ENCODE measurements at regions of chr7 and their contacts with region 1.

Region 1: DNA sequence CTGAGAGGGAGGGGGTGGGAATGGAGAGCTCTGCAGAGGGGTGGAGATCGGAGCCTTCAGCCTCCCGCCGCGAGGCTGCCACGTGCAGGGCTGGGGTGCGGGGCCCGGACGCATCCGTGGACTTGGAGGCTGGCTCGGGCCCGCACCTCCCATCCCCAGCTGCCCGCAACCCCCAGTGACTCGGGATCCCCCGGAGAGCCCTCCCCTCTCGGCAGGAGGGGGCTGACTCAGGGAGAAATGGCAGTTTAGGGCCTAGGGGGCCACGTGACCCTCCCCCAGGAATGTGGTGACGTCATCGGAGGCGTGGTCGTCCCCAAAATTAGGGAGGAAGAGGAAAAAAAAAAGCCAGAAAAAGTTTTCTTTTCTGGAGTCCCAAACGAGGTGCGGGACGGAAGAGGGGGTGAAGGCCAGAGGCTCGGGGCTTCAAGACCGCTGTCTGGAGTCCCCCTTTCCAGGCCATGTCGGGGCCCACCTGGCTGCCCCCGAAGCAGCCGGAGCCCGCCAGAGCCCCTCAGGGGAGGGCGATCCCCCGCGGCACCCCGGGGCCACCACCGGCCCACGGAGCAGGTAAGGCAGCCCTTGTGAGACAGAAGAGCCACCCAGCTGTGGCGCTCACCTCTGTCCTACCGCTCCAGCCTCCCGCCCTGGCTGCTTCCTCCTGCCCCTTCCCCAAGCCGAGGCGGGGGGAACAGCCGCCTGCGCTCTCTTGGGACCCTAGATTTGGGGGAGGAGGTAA is at the start of gene TRIP6:
- DNase-seq: peak; percentile 88 to 90
- H3K4me3 ChIP-seq: peak within 1 kb of the TSS; percentile 88 to 98 (median 97)
- H3K27ac ChIP-seq: peak within 1 kb of the TSS; percentile 99 to 100
- H3K4me1 ChIP-seq: peaks cover 12 to 18% of the 10 kb centered on the region in 2 donors
- H3K27me3 ChIP-seq: no peaks in the 10 kb centered on the region
- CTCF ChIP-seq: no peak
- POLR2A ChIP-seq: no peak
- total RNA-seq, gene TRIP6: 45.3 to 62.8 (median 49.8) TPM

Region 2: GRCh38 chr7:100705753-100706671 is 161.2 kb before region 1 on chr7 and contains the start of gene POP7:
- intact Hi-C with region 1: loop called (anchors 10 kb)
- DNase-seq: peak; percentile 97 to 100
- H3K4me3 ChIP-seq: peak within 1 kb of the TSS; percentile 65 to 87 (median 79)
- H3K27ac ChIP-seq: peak within 1 kb of the TSS; percentile 91 to 93
- H3K4me1 ChIP-seq: peaks cover 0 to 13% of the 10 kb centered on the region in 2 donors
- H3K27me3 ChIP-seq: no peaks in the 10 kb centered on the region
- CTCF ChIP-seq: no peak
- POLR2A ChIP-seq: peak; percentile 43
- total RNA-seq, gene POP7: 25.8 to 28.2 (median 27.4) TPM

Region 3: GRCh38 chr7:100894860-100895421 is 27.7 kb after region 1 on chr7:
- intact Hi-C with region 1: loop called (anchors 1 kb)
- DNase-seq: no peak
- H3K4me3 ChIP-seq: peak overlapping the region; percentile 35 to 67 (median 58)
- H3K27ac ChIP-seq: peak overlapping the region; percentile 0 to 29
- H3K4me1 ChIP-seq: peaks cover 0 to 6% of the 10 kb centered on the region in 2 donors
- H3K27me3 ChIP-seq: peaks cover 4 to 37% of the 10 kb centered on the region in 2 donors
- CTCF ChIP-seq: peak; percentile 62 to 82 (median 70)
- POLR2A ChIP-seq: no peak